Cardiac septum (tissue), 1 donor: ENCODE measurements at regions of chr4 and their contacts with region 1.

Region 1: GRCh38 chr4:55948726-55949474 is at the start of gene CEP135:
- DNase-seq: peak; percentile 97
- total RNA-seq, gene CEP135: 3.5 TPM

Region 2: DNA sequence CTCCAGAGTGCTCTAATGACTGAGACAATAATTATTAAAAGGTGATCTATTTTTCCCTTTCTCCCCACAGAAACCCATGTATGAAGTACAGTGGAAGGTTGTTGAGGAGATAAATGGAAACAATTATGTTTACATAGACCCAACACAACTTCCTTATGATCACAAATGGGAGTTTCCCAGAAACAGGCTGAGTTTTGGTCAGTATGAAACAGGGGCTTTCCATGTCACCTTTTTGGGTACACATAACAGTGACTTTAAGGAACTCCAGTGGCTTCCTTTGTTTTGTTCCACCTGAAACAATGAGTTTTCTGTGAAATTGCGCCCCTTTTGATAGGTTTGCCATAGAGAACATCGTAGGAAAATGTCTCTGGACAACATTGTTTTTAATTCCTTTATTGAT is 1221.6 kb before region 1 on chr4:
- intact Hi-C with region 1: no loop called
- DNase-seq: no peak

Region 3: DNA sequence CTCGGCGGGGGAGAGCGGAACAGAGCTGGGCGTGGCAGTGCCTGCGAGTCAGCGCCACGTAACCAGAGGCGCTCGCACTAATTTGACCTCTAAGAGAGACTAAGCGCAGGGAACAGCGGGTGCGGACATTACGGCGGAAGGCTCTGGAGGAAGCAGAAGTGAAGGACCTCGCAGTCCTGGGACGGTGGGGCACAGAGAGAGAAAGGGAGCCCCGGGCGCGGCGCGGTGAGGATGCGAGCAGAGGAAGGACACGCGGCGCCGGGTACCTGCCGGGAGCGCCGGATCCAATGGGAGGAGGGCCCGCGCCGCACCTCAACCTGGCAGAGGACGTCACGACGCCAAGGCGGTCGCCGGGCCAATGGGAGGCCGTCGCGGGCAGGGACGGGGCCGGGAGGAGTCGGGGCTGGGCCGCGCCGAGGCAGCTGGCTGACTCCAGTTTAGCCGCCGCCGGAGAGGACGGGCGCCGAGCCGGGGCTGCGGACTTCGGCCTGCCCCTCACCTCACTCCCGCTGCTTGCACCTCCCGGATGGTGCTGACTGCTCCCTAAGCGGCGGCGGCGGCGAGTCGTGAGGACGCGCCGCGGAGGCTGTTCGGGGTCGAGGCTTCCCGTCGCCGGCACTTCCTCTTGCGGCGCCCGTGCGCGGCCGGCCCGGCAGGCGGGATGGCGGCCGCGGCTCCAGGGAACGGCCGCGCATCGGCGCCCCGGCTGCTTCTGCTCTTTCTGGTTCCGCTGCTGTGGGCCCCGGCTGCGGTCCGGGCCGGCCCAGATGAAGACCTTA is 553.2 kb before region 1 on chr4 and contains the start of gene TMEM165:
- intact Hi-C with region 1: loop called (anchors 5 kb)
- DNase-seq: peak; percentile 97
- total RNA-seq, gene TMEM165: 56.4 TPM

Region 4: GRCh38 chr4:55853484-55854046 is 95.3 kb before region 1 on chr4 and contains the start of gene EXOC1:
- intact Hi-C with region 1: loop called (anchors 2 kb)
- DNase-seq: peak; percentile 98
- total RNA-seq, gene EXOC1: 26.6 TPM

Region 5: DNA sequence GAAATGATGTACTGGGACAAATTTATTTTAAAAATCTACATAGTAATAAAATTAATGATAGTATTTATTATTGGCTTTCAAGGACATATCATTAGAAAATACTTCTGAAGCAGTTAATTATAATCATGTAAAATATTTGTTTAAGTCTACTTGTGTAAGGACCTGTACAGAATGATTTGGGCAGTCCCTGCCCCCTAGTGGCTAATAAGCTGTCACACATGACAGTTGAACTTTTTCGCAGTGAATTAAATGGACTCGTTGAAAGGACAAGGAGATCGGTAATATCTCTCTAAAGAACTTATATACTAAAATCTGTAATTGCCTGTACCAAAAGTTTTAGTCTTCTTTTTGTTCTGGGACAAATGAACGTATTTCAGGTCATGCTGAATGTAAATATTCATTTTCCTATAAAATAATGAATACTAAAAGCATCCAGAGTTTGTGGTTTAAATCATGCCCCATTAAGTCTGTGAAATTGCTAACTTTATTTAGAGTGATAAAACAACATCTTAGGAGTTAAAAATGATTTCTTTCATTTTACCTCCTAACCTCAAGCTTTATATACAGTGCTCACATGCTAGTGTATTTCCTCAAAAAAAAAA is 81.8 kb before region 1 on chr4:
- intact Hi-C with region 1: loop called (anchors 2 kb)
- DNase-seq: no peak

Region 6: DNA sequence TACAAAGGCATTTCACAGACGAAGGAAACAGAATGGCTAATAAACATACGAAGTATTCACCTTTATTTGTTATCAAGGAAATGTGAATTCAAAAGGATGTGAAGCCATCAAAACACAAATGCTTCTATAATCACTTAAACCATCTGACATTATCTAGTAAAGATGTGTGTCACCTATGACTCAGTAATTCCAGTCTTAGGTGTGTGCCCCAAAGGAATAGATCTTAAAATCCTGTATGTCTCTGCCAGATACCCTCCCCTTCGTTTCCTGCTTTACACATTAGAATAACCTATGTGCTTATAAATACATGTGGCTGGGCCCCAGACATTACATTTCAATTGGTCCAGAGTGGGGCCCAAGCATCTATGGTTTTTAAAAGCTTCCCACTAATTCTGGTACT is 41.9 kb before region 1 on chr4:
- intact Hi-C with region 1: loop called (anchors 5 kb)
- DNase-seq: no peak

Region 7: DNA sequence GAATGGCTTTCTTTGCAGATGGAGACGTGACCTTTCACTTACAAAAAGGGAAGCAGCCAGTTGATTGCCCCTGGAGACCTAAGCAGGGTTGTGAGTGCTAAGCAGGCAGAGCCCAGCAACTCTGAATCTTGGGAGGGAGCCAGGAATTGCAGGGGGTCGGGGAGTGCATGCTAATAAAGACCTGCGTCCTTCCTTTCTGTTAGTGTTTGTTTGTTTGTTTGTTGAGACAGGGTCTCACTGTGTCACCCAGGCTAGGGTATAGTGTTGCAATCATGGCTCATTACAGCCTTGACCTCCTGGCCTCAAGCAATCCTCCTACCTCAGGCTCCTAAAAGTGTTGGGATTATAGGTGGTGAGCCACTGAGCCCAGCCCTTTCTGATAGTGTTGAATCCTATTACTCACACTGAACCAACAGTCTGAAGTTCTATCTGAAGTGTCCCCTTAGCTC is 137.2 kb after region 1 on chr4:
- intact Hi-C with region 1: no loop called
- DNase-seq: no peak

Region 8: DNA sequence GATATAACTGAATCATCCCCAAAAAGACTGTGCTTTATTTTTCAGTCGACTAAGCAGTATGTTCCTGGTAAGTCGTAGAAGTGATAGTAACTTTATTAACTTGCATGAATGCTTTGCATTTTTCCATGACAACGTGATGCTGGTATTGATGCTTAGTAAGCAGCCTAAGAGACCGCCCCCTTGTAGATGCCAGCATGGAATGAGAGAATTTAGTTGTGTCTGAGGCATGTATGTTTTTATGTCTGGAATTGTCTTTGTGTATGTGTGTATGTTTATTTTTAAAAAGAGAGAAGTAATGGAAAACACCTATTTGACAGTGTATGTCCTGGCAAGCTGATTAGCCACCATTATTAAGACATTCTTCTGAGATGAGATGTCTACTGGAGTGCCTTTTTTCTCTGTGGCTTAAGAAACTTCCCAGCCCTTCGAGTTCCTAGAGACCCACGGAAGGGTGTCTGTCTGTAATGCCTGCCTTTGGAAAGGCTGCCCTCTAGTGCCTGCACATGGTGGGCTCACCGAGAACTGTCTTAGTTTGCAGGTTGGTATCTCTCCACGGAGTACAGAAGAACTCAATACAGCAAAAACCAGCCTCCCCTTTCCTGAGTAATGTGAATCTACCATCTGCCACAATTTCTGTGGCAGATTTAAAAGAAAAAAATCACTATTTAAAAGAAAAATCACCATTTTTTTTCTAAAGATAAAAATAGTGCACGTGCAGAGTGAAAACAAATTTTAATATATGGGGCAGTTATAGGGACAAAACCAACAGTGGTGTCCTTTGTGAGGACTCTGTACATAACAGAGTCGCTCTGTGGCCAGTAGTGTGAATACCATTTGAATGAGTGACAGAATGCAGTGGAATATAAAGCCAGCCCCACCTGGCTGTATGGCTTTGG is 352.5 kb after region 1 on chr4:
- intact Hi-C with region 1: loop called (anchors 2 kb)
- DNase-seq: no peak